ENCODE measurements at regions of chr2 and their contacts with region 1.

Region 1: DNA sequence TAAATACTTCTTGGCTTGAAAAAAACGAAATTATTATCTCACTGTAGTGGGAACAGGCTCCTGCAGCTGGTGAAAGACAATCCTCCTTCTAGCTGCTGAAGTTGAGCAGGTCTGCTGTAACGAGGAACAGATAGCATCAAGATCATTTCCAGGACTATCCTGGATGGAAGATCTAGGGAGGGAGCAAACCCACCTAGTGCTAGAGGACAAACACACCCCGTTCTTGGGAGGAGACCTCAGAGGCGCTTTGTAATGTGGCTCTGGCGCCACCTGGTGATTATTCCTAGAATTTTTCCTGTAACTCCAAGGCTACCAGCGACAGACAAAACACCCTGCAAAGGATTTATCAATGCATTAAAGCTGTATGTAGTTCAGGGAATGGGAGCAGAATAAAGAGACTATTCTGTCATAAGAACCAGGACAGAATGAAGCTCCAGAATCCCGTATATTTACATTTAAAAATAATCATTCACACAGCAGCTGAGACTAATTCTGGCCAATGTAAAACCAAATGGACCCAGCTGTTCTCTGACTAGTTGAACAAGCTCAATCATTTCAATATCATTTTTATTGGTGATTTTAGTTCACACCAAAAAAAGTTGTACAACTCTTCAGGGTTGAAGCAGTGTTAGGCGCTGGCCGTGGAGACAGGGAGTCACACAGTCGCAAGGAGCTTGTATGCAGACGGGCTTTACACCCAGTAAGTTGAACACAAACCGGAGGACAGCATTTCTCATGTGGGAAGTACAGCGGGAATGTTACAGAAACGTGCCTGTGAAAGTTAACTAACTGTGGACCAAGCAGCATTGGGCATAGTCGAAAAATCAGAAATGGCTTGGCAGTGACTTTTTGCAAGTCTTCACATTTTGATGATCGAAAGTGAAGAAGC is 290.3 kb downstream of the TRIB2 start:
- DNase-seq: peak; percentile 73
- H3K4me3 ChIP-seq: peak overlapping the region; percentile 14 to 39; a peak in 2 of 4 replicates
- H3K27ac ChIP-seq: peak overlapping the region; percentile 3 to 64; a peak in 3 of 4 replicates
- H3K4me1 ChIP-seq: peaks cover 25 to 32% of the 10 kb centered on the region in 2 experiments
- H3K27me3 ChIP-seq: no peaks in the 10 kb centered on the region
- CTCF ChIP-seq: peak; percentile 94
- EP300 ChIP-seq: peak; percentile 16 to 94; a peak in 2 of 4 replicates
- RAD21 ChIP-seq: peak; percentile 100

Region 2: GRCh38 chr2:11175293-11175795 is 1831.7 kb before region 1 on chr2:
- CTCF ChIA-PET with region 1: no interaction called
- POLR2A ChIA-PET with region 1: no interaction called
- DNase-seq: no peak
- H3K4me3 ChIP-seq: no peak overlapping the region
- H3K27ac ChIP-seq: peak overlapping the region in 1 of 2 experiments; percentile 63; a peak in 2 of 4 replicates
- H3K4me1 ChIP-seq: peaks cover 5 to 12% of the 10 kb centered on the region in 2 experiments; a peak in 2 of 4 replicates
- H3K27me3 ChIP-seq: no peaks in the 10 kb centered on the region
- CTCF ChIP-seq: no peak
- EP300 ChIP-seq: peak in 1 of 2 experiments; percentile 48; a peak in 2 of 4 replicates
- RAD21 ChIP-seq: no peak

Region 3: GRCh38 chr2:11778923-11779757 is 1227.9 kb before region 1 on chr2:
- CTCF ChIA-PET with region 1: interaction called, 16 read pairs
- POLR2A ChIA-PET with region 1: no interaction called
- DNase-seq: peak; percentile 95
- H3K4me3 ChIP-seq: peak overlapping the region in 1 of 2 experiments; percentile 33; a peak in 1 of 4 replicates
- H3K27ac ChIP-seq: no peak overlapping the region
- H3K4me1 ChIP-seq: peaks cover 6 to 10% of the 10 kb centered on the region in 2 experiments; a peak in 2 of 4 replicates
- H3K27me3 ChIP-seq: no peaks in the 10 kb centered on the region
- CTCF ChIP-seq: peak; percentile 99
- EP300 ChIP-seq: no peak
- RAD21 ChIP-seq: peak; percentile 97

Region 4: DNA sequence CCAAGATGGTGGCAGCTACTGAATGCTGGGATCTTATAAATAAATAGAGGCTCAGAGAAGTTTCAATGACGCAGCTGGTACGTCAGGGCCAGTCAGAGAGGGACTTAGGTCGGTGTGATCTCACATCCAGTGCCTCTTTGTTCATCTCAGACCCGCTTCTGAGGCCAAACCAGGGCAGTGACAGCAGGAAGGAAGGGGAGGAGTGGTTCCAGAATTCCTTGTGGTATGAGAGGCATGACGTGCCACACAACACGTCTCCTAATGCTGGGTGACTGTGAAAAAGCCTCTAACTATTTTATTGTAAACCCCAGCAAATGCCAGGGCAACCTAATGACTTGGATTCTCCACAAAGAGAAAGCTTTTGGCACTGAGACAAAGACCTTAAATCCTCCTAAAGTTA is 837.4 kb before region 1 on chr2:
- CTCF ChIA-PET with region 1: interaction called, 13 read pairs
- POLR2A ChIA-PET with region 1: no interaction called
- DNase-seq: no peak
- H3K4me3 ChIP-seq: no peak overlapping the region
- H3K27ac ChIP-seq: peak overlapping the region in 1 of 2 experiments; percentile 73; a peak in 3 of 4 replicates
- H3K4me1 ChIP-seq: peaks cover 28 to 31% of the 10 kb centered on the region in 2 experiments; a peak in 2 of 4 replicates
- H3K27me3 ChIP-seq: no peaks in the 10 kb centered on the region
- CTCF ChIP-seq: no peak
- EP300 ChIP-seq: no peak
- RAD21 ChIP-seq: no peak

Region 5: DNA sequence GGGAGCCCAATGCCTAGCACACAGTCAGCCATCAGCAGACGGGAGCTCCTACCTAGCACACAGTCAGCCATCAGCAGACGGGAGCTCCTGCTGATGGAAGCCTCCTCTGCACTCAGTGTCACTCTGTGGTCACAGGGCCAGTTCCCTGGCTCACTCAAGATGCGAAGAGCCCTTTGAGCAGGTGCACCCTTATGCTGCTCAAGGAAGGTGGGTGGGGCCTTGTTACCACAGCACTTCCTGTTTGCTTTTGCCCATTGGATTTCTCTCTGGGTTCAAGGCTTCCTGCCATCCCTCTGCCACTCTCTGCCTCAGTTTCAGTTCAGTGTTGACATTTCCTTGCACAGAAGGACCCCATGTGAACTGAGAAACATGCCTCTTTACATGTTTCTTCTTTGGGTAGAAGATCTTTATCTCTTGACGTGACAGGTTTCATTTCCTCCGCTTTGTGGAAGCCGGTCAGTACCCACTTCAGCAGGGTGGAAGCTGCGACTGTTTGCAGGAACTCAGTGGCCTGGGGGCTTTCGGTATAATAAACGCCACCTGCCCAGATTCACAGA is 278.8 kb before region 1 on chr2:
- CTCF ChIA-PET with region 1: interaction called, 97 read pairs
- POLR2A ChIA-PET with region 1: interaction called, 4 read pairs
- DNase-seq: no peak
- H3K4me3 ChIP-seq: no peak overlapping the region
- H3K27ac ChIP-seq: no peak overlapping the region
- H3K4me1 ChIP-seq: peaks cover 10 to 16% of the 10 kb centered on the region in 2 experiments; a peak in 3 of 4 replicates
- H3K27me3 ChIP-seq: no peaks in the 10 kb centered on the region
- CTCF ChIP-seq: no peak
- EP300 ChIP-seq: no peak
- RAD21 ChIP-seq: no peak

Region 6: GRCh38 chr2:12807907-12808810 is 198.9 kb before region 1 on chr2:
- CTCF ChIA-PET with region 1: interaction called, 28 read pairs
- POLR2A ChIA-PET with region 1: no interaction called
- DNase-seq: no peak
- H3K4me3 ChIP-seq: no peak overlapping the region
- H3K27ac ChIP-seq: no peak overlapping the region
- H3K4me1 ChIP-seq: peaks cover 8 to 10% of the 10 kb centered on the region in 2 experiments; a peak in 3 of 4 replicates
- H3K27me3 ChIP-seq: no peaks in the 10 kb centered on the region
- CTCF ChIP-seq: no peak
- EP300 ChIP-seq: no peak
- RAD21 ChIP-seq: no peak

Region 7: DNA sequence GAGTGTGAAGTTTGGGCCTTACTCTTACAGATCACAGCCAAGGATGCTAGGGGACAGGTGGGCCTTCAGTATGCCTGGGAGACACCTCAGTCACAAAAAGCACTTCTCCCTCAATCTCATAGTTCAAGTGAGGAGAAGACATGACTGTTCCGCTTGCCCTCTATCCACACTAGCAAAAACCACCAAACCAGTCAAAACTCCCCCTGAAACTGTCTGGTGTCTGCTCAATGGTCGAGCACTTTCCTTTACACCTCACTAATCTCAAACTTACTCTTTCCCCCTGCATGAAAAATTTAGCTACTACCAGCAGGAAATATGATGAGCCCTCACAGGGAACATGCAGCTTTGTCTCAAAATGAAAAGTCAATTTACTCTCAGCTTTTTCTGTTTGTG is 58.1 kb before region 1 on chr2:
- CTCF ChIA-PET with region 1: interaction called, 56 read pairs
- POLR2A ChIA-PET with region 1: interaction called, 16 read pairs
- DNase-seq: no peak
- H3K4me3 ChIP-seq: no peak overlapping the region; a peak in 1 of 4 replicates
- H3K27ac ChIP-seq: peak overlapping the region; percentile 59 to 100
- H3K4me1 ChIP-seq: peaks cover 32 to 37% of the 10 kb centered on the region in 2 experiments
- H3K27me3 ChIP-seq: no peaks in the 10 kb centered on the region
- CTCF ChIP-seq: no peak
- EP300 ChIP-seq: no peak
- RAD21 ChIP-seq: no peak

Region 8: DNA sequence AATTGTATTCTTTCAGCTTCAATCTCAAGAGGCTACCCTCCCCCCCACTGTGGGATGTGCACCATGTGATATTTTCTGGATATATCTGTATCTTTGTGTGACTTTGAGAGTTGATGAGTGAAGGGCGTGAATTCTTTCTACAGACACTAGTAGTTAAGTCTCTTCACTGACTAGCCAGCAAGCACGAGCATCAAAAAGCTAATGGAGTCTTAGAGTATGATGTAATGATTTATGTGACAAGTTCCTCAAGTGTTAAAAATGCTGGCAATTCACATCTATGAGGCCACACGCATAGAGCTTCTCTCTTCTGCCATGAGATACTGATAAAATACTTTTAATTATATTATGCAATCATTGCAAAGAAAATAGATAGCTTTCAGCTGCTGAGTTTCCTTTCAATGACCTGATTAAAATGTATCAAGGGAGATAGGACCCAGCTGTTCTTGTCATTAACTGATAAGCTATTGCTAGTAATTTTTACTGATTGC is 14.4 kb after region 1 on chr2:
- CTCF ChIA-PET with region 1: interaction called, 58 read pairs
- POLR2A ChIA-PET with region 1: interaction called, 3 read pairs
- DNase-seq: peak; percentile 34
- H3K4me3 ChIP-seq: no peak overlapping the region
- H3K27ac ChIP-seq: peak overlapping the region in 1 of 2 experiments; percentile 19; a peak in 1 of 4 replicates
- H3K4me1 ChIP-seq: peaks cover 0 to 22% of the 10 kb centered on the region in 2 experiments; a peak in 2 of 4 replicates
- H3K27me3 ChIP-seq: peaks cover 5% of the 10 kb centered on the region
- CTCF ChIP-seq: no peak
- EP300 ChIP-seq: peak; percentile 10 to 98; a peak in 2 of 4 replicates
- RAD21 ChIP-seq: 0 out of 2 replicates have a peak, but pooled peaks have one; percentile 3

Region 9: GRCh38 chr2:13091455-13091854 is 84.4 kb after region 1 on chr2:
- CTCF ChIA-PET with region 1: no interaction called
- POLR2A ChIA-PET with region 1: no interaction called
- DNase-seq: no peak
- H3K4me3 ChIP-seq: no peak overlapping the region
- H3K27ac ChIP-seq: no peak overlapping the region
- H3K4me1 ChIP-seq: no peaks in the 10 kb centered on the region
- H3K27me3 ChIP-seq: no peaks in the 10 kb centered on the region
- CTCF ChIP-seq: no peak
- EP300 ChIP-seq: no peak
- RAD21 ChIP-seq: no peak